Caco-2 (cell line): ENCODE measurements at regions of chr3 and their contacts with region 1.

Region 1: GRCh38 chr3:71341721-71342120 is 241.8 kb downstream of the FOXP1 start:
- DNase-seq: no peak
- H3K4me3 ChIP-seq: no peak overlapping the region
- H3K4me3 Mint-ChIP-seq: no peak overlapping the region
- H3K27ac Mint-ChIP-seq: no peak overlapping the region
- H3K4me1 ChIP-seq: no peaks in the 10 kb centered on the region
- H3K4me1 Mint-ChIP-seq: peaks cover 7% of the 10 kb centered on the region
- H3K27me3 ChIP-seq: no peaks in the 10 kb centered on the region
- H3K27me3 Mint-ChIP-seq: no peaks in the 10 kb centered on the region
- CTCF ChIP-seq: no peak

Region 2: DNA sequence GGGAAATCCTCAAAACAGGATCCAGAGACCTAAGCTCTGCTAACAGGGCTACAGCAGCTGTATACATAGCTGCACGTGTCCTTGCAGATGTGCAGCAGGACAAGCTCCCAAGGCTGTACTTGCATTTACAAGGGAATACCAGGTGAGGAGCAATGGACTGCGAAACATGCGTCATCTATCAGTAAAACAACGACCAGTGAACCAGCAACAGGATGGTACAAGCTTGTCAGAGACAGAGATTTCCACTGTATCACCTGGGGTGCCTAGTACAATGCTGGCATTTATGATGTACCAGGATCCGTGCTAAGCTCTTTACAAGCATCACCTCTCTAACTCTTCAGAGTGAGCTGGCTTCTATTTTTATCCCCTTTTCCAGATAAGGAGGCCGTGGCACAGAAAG is 14.5 kb after region 1 on chr3:
- CTCF ChIA-PET with region 1: no interaction called
- POLR2A ChIA-PET with region 1: interaction called, 17 read pairs
- intact Hi-C with region 1: no loop called
- DNase-seq: no peak
- H3K4me3 ChIP-seq: no peak overlapping the region
- H3K4me3 Mint-ChIP-seq: no peak overlapping the region
- H3K27ac Mint-ChIP-seq: no peak overlapping the region
- H3K4me1 ChIP-seq: 0 out of 2 replicates have a peak, but pooled peaks cover 5% of the 10 kb centered on the region
- H3K4me1 Mint-ChIP-seq: no peaks in the 10 kb centered on the region
- H3K27me3 ChIP-seq: no peaks in the 10 kb centered on the region
- H3K27me3 Mint-ChIP-seq: no peaks in the 10 kb centered on the region
- CTCF ChIP-seq: no peak

Region 3: GRCh38 chr3:71468311-71469137 is 126.8 kb after region 1 on chr3:
- CTCF ChIA-PET with region 1: no interaction called
- POLR2A ChIA-PET with region 1: no interaction called
- intact Hi-C with region 1: no loop called
- DNase-seq: no peak
- H3K4me3 ChIP-seq: no peak overlapping the region
- H3K4me3 Mint-ChIP-seq: no peak overlapping the region
- H3K27ac Mint-ChIP-seq: no peak overlapping the region
- H3K4me1 ChIP-seq: no peaks in the 10 kb centered on the region
- H3K4me1 Mint-ChIP-seq: no peaks in the 10 kb centered on the region
- H3K27me3 ChIP-seq: no peaks in the 10 kb centered on the region
- H3K27me3 Mint-ChIP-seq: no peaks in the 10 kb centered on the region
- CTCF ChIP-seq: no peak

Region 4: GRCh38 chr3:71641674-71642073 is 300.0 kb after region 1 on chr3:
- CTCF ChIA-PET with region 1: no interaction called
- POLR2A ChIA-PET with region 1: no interaction called
- intact Hi-C with region 1: no loop called
- DNase-seq: peak; percentile 34 to 53
- H3K4me3 ChIP-seq: no peak overlapping the region
- H3K4me3 Mint-ChIP-seq: no peak overlapping the region
- H3K27ac Mint-ChIP-seq: no peak overlapping the region
- H3K4me1 ChIP-seq: peaks cover 9% of the 10 kb centered on the region; the same call in 1 of the 2 replicates
- H3K4me1 Mint-ChIP-seq: no peaks in the 10 kb centered on the region
- H3K27me3 ChIP-seq: no peaks in the 10 kb centered on the region
- H3K27me3 Mint-ChIP-seq: no peaks in the 10 kb centered on the region
- CTCF ChIP-seq: no peak